ENCODE measurements at regions of chr2 and their contacts with region 1.

Region 1: GRCh38 chr2:191150600-191151330 is at the start of gene STAT4:
- DNase-seq: peak; percentile 70 to 92 (median 89)
- H3K4me3 ChIP-seq: peak within 1 kb of the TSS; percentile 98
- H3K4me3 Mint-ChIP-seq: peak within 1 kb of the TSS; percentile 90 to 98 (median 98)
- H3K27ac ChIP-seq: peak within 1 kb of the TSS; percentile 97
- H3K27ac Mint-ChIP-seq: peak within 1 kb of the TSS; percentile 85 to 100 (median 96)
- H3K4me1 ChIP-seq: peaks cover 50% of the 10 kb centered on the region
- H3K4me1 Mint-ChIP-seq: peaks cover 65 to 76% (median 71%) of the 10 kb centered on the region in 3 donors
- H3K27me3 ChIP-seq: no peaks in the 10 kb centered on the region
- H3K27me3 Mint-ChIP-seq: peaks cover 0 to 2% of the 10 kb centered on the region in 2 donors
- total RNA-seq, gene STAT4: 53.0 to 54.7 TPM

Region 2: GRCh38 chr2:190827720-190828119 is 323.0 kb before region 1 on chr2:
- CTCF ChIA-PET with region 1: no interaction called
- POLR2A ChIA-PET with region 1: no interaction called
- DNase-seq: no peak
- H3K4me3 ChIP-seq: no peak overlapping the region
- H3K4me3 Mint-ChIP-seq: no peak overlapping the region
- H3K27ac ChIP-seq: no peak overlapping the region
- H3K27ac Mint-ChIP-seq: peak overlapping the region in 1 of 8 donors; percentile 26
- H3K4me1 ChIP-seq: no peaks in the 10 kb centered on the region
- H3K4me1 Mint-ChIP-seq: no peaks in the 10 kb centered on the region
- H3K27me3 ChIP-seq: no peaks in the 10 kb centered on the region
- H3K27me3 Mint-ChIP-seq: peaks cover 0 to 2% of the 10 kb centered on the region in 2 donors

Region 3: DNA sequence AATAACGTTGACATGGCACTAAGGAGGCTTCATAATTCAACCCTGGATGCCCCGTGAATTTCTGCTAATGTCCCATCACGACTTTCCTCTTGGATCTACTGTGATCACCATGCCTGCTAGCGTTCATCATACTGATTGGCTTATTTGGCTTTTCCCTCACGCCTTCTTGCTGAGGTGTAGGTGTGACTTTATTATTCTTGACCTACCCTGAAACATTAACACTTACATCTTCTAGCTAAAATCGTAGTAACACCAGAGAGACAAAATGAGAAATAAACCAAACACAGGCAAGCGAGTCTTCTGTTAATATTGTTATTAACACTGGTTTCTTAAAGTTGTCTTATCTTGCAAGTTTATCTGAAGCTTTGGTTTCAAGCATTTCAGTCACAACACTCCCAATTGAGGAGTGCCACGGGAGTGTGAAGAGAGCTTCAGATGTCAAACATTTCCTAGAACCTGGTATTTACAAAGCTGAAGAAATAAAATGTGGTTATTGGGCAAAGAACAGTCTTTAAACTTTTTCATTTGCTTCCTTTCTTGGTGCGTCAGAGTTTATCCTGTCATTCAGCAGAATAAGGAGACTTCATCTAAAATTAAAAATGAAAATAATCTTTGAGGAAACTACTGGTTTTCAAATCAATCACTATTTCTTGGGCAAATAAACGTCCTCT is 121.3 kb before region 1 on chr2:
- CTCF ChIA-PET with region 1: interaction called, 12 read pairs
- POLR2A ChIA-PET with region 1: interaction called, 3 read pairs
- DNase-seq: no peak
- H3K4me3 ChIP-seq: peak overlapping the region; percentile 24
- H3K4me3 Mint-ChIP-seq: peak overlapping the region in 6 of 7 donors; percentile 11 to 38 (median 24)
- H3K27ac ChIP-seq: no peak overlapping the region
- H3K27ac Mint-ChIP-seq: peak overlapping the region; percentile 3 to 93 (median 72)
- H3K4me1 ChIP-seq: peaks cover 30% of the 10 kb centered on the region
- H3K4me1 Mint-ChIP-seq: peaks cover 33 to 55% (median 40%) of the 10 kb centered on the region in 3 donors
- H3K27me3 ChIP-seq: no peaks in the 10 kb centered on the region
- H3K27me3 Mint-ChIP-seq: no peaks in the 10 kb centered on the region

Region 4: DNA sequence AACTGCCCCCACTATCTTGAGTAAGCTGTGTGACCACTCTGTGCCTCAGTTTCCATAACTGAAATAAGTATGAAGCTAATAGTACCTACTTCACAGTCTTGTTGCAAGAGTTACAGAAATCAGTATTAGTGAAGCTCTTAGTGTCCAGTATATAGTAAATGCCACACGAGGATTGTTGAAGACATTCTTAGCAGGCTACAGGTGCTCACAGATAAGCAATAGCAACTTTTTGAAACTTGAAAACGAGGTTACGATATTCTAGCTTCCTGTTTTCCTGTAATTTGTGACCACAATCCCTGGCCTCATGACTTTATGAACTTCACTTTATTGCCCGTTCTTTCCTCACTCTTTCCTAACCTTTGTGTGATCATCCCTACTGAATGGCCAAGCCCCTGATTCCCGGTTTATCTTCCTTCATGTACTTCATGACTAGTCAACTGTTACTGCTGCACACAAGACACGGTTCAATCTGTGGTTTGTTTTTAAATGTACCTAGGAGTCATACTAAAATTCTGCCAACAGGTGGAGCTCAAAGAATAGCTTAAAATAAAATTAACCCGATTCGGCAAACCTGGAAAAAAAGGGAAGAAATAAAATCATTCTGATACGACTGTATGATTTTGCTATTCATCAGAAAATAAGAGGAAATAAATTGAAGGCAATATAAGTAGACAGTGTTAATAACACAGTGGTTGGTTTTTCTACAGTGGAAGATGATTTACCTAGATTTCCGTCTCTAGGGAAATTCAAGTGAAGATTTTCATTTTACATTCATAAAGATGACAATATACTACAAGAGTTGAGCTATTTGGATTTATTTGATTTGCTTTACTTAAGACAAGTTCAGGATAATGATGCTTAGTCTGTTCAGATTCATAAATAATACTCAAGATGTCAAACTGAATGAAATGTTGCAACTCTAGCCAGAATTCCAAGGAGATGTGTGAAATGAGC is 98.7 kb before region 1 on chr2:
- CTCF ChIA-PET with region 1: interaction called, 390 read pairs
- POLR2A ChIA-PET with region 1: interaction called, 17 read pairs
- DNase-seq: peak in 2 of 5 donors; percentile 53 to 65
- H3K4me3 ChIP-seq: no peak overlapping the region
- H3K4me3 Mint-ChIP-seq: no peak overlapping the region
- H3K27ac ChIP-seq: no peak overlapping the region
- H3K27ac Mint-ChIP-seq: no peak overlapping the region
- H3K4me1 ChIP-seq: peaks cover 18% of the 10 kb centered on the region
- H3K4me1 Mint-ChIP-seq: peaks cover 22 to 34% (median 24%) of the 10 kb centered on the region in 3 donors
- H3K27me3 ChIP-seq: no peaks in the 10 kb centered on the region
- H3K27me3 Mint-ChIP-seq: no peaks in the 10 kb centered on the region

Region 5: DNA sequence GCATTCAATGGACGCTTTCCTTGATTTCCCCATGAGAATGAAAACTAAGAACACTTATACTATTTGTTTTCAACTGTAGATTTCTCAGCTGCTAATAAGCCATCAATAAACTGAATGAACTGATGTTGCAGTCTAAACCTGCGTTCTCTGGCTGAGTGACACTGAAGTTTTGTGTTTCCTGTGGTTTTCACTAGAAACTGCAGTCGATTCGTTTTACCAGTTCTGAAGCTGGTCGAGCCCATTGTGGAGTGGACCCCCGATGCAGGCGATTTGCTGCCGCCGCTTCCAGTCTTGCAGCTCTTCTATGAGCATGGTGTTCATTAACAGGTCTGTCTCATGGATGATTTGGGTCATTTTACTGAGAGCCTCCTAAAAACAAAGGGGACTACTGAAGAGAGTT is 86.2 kb before region 1 on chr2:
- CTCF ChIA-PET with region 1: interaction called, 23 read pairs
- POLR2A ChIA-PET with region 1: interaction called, 9 read pairs
- DNase-seq: peak in 3 of 5 donors; percentile 6 to 51 (median 29)
- H3K4me3 ChIP-seq: peak overlapping the region; percentile 43
- H3K4me3 Mint-ChIP-seq: peak overlapping the region; percentile 82 to 96 (median 90)
- H3K27ac ChIP-seq: no peak overlapping the region
- H3K27ac Mint-ChIP-seq: peak overlapping the region; percentile 86 to 98 (median 96)
- H3K4me1 ChIP-seq: peaks cover 67% of the 10 kb centered on the region
- H3K4me1 Mint-ChIP-seq: peaks cover 73 to 92% (median 88%) of the 10 kb centered on the region in 3 donors
- H3K27me3 ChIP-seq: no peaks in the 10 kb centered on the region
- H3K27me3 Mint-ChIP-seq: no peaks in the 10 kb centered on the region

Region 6: GRCh38 chr2:191114403-191114886 is 36.3 kb before region 1 on chr2:
- CTCF ChIA-PET with region 1: interaction called, 22 read pairs
- POLR2A ChIA-PET with region 1: interaction called, 26 read pairs
- DNase-seq: peak in 4 of 5 donors; percentile 30 to 68 (median 50)
- H3K4me3 ChIP-seq: no peak overlapping the region
- H3K4me3 Mint-ChIP-seq: peak overlapping the region; percentile 28 to 83 (median 68)
- H3K27ac ChIP-seq: peak overlapping the region; percentile 65
- H3K27ac Mint-ChIP-seq: peak overlapping the region; percentile 91 to 100 (median 98)
- H3K4me1 ChIP-seq: peaks cover 51% of the 10 kb centered on the region
- H3K4me1 Mint-ChIP-seq: peaks cover 76 to 93% (median 89%) of the 10 kb centered on the region in 3 donors
- H3K27me3 ChIP-seq: no peaks in the 10 kb centered on the region
- H3K27me3 Mint-ChIP-seq: no peaks in the 10 kb centered on the region

Region 7: GRCh38 chr2:191171708-191172355 is 21.1 kb after region 1 on chr2:
- CTCF ChIA-PET with region 1: interaction called, 25 read pairs
- POLR2A ChIA-PET with region 1: no interaction called
- DNase-seq: no peak
- H3K4me3 ChIP-seq: no peak overlapping the region
- H3K4me3 Mint-ChIP-seq: no peak overlapping the region
- H3K27ac ChIP-seq: no peak overlapping the region
- H3K27ac Mint-ChIP-seq: no peak overlapping the region
- H3K4me1 ChIP-seq: peaks cover 4% of the 10 kb centered on the region
- H3K4me1 Mint-ChIP-seq: peaks cover 9 to 21% (median 17%) of the 10 kb centered on the region in 3 donors
- H3K27me3 ChIP-seq: no peaks in the 10 kb centered on the region
- H3K27me3 Mint-ChIP-seq: peaks cover 0 to 8% of the 10 kb centered on the region in 2 donors

Region 8: GRCh38 chr2:191222507-191222906 is 71.7 kb after region 1 on chr2:
- CTCF ChIA-PET with region 1: no interaction called
- POLR2A ChIA-PET with region 1: no interaction called
- DNase-seq: no peak
- H3K4me3 ChIP-seq: no peak overlapping the region
- H3K4me3 Mint-ChIP-seq: no peak overlapping the region
- H3K27ac ChIP-seq: no peak overlapping the region
- H3K27ac Mint-ChIP-seq: no peak overlapping the region
- H3K4me1 ChIP-seq: no peaks in the 10 kb centered on the region
- H3K4me1 Mint-ChIP-seq: no peaks in the 10 kb centered on the region
- H3K27me3 ChIP-seq: no peaks in the 10 kb centered on the region
- H3K27me3 Mint-ChIP-seq: peaks cover 0 to 2% of the 10 kb centered on the region in 2 donors

Region 9: DNA sequence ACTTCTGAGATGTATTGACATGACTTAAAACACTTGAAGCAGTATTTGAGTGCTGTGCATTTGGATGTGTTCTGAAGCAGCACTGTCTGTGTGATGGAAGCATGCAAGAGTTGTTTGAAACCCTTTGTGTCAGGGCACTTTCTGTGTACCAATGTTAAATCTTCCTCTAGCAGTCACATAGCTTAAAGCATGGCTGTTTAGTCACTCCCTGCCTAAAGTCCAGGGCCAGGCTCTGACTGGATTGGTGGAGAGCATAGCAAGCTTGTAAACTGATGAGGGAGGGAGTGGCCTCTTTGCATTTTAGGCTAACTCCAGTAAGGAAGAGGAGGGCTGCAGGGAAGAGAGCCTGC is 167.9 kb after region 1 on chr2:
- CTCF ChIA-PET with region 1: no interaction called
- POLR2A ChIA-PET with region 1: no interaction called
- DNase-seq: no peak
- H3K4me3 ChIP-seq: no peak overlapping the region
- H3K4me3 Mint-ChIP-seq: no peak overlapping the region
- H3K27ac ChIP-seq: no peak overlapping the region
- H3K27ac Mint-ChIP-seq: no peak overlapping the region
- H3K4me1 ChIP-seq: peaks cover 12% of the 10 kb centered on the region
- H3K4me1 Mint-ChIP-seq: peaks cover 10 to 15% (median 12%) of the 10 kb centered on the region in 3 donors
- H3K27me3 ChIP-seq: no peaks in the 10 kb centered on the region
- H3K27me3 Mint-ChIP-seq: peaks cover 21 to 41% of the 10 kb centered on the region in 2 donors

Region 10: GRCh38 chr2:192783643-192784042 is 1632.9 kb after region 1 on chr2:
- CTCF ChIA-PET with region 1: no interaction called
- POLR2A ChIA-PET with region 1: no interaction called
- DNase-seq: no peak
- H3K4me3 ChIP-seq: no peak overlapping the region
- H3K4me3 Mint-ChIP-seq: no peak overlapping the region
- H3K27ac ChIP-seq: no peak overlapping the region
- H3K27ac Mint-ChIP-seq: no peak overlapping the region
- H3K4me1 ChIP-seq: no peaks in the 10 kb centered on the region
- H3K4me1 Mint-ChIP-seq: no peaks in the 10 kb centered on the region
- H3K27me3 ChIP-seq: no peaks in the 10 kb centered on the region
- H3K27me3 Mint-ChIP-seq: no peaks in the 10 kb centered on the region